ENCODE measurements at regions of chr7 and their contacts with region 1.

Region 1: DNA sequence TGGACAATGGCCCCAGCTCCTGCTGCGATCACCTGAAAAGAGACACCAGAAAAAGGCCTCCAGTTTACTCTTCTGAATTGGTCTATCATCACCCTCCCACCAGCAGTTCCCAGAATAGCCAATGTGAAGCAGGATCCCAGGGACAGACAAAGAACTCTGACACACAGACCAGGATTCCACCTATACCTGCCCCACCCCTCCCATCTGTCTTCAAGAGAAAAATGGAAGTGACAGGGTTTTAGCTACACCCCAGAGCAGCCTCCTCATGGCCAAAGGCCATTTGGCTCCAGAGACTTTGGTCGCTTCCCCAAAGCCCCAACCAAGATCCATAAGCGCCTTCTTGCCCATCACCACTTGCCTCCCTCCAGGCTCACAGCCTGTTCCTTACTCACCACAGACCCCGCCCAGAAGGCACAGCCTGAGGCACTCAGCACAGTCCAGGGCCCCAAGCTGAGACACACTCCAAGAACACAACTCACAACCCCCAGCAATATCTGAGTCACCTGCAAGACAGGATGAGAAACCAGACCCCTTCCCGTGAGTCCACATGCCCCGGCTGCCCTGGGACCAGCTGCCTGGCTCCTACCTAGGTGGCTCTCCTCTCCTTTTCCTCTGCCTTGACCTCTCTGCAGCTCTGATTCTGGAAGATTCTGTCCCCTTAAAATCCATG is 6.5 kb downstream of the TMEM176B start:
- DNase-seq: no peak
- H3K4me3 Mint-ChIP-seq: no peak overlapping the region
- H3K27ac Mint-ChIP-seq: no peak overlapping the region
- H3K4me1 Mint-ChIP-seq: no peaks in the 10 kb centered on the region
- H3K27me3 Mint-ChIP-seq: peaks cover 11% of the 10 kb centered on the region

Region 2: DNA sequence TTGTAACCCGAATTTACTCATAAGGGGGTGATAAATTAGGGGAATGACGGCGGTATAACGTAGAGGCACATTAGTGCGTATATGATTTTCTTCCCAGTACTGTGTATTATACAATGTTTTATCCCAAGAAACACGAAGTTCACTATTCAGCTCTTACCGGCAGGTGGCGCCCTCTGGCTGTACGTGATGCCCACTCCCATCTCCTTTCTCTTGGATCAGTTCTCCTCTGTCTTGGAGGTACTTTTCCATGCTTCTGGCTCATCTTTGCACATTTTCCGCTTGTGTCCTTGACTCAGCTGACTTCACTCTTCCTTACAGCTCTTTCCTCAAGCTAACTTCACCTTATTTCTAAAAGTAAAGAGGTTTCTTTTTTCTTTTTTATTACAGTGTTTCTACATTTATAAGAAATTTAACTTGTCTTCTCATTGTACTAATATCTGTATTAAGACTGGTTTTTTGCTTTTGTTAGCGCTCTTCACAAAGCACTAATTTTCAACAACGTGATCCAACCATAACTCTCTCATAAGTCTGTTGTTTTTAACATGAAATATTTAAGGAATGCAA is 14.9 kb before region 1 on chr7:
- CTCF ChIA-PET with region 1: interaction called, 11 read pairs
- POLR2A ChIA-PET with region 1: no interaction called
- intact Hi-C with region 1: no loop called
- DNase-seq: peak; percentile 81
- H3K4me3 Mint-ChIP-seq: no peak overlapping the region
- H3K27ac Mint-ChIP-seq: no peak overlapping the region
- H3K4me1 Mint-ChIP-seq: peaks cover 4% of the 10 kb centered on the region
- H3K27me3 Mint-ChIP-seq: peaks cover 1% of the 10 kb centered on the region